Right ventricle myocardium inferior (tissue), 1 donor: ENCODE measurements at regions of chr18 and their contacts with region 1.

Region 1: GRCh38 chr18:11733031-11733430 is 44.0 kb downstream of the GNAL start:
- DNase-seq: peak; percentile 93
- ATAC-seq: peak; percentile 86

Region 2: GRCh38 chr18:11851146-11851805 is 118.2 kb after region 1 on chr18 and contains the start of gene CHMP1B:
- intact Hi-C with region 1: loop called (anchors 5 kb)
- DNase-seq: peak; percentile 100
- ATAC-seq: peak; percentile 98
- total RNA-seq, gene CHMP1B: 28.6 TPM

Region 3: GRCh38 chr18:11872479-11873136 is 139.6 kb after region 1 on chr18:
- intact Hi-C with region 1: loop called (anchors 1 kb)
- DNase-seq: no peak
- ATAC-seq: peak; percentile 86

Region 4: GRCh38 chr18:11995445-11996189 is 262.6 kb after region 1 on chr18:
- intact Hi-C with region 1: loop called (anchors 5 kb)
- DNase-seq: peak; percentile 88
- ATAC-seq: peak; percentile 85

Region 5: GRCh38 chr18:12038639-12039417 is 305.8 kb after region 1 on chr18:
- intact Hi-C with region 1: loop called (anchors 2 kb)
- DNase-seq: peak; percentile 92
- ATAC-seq: peak; percentile 97

Region 6: DNA sequence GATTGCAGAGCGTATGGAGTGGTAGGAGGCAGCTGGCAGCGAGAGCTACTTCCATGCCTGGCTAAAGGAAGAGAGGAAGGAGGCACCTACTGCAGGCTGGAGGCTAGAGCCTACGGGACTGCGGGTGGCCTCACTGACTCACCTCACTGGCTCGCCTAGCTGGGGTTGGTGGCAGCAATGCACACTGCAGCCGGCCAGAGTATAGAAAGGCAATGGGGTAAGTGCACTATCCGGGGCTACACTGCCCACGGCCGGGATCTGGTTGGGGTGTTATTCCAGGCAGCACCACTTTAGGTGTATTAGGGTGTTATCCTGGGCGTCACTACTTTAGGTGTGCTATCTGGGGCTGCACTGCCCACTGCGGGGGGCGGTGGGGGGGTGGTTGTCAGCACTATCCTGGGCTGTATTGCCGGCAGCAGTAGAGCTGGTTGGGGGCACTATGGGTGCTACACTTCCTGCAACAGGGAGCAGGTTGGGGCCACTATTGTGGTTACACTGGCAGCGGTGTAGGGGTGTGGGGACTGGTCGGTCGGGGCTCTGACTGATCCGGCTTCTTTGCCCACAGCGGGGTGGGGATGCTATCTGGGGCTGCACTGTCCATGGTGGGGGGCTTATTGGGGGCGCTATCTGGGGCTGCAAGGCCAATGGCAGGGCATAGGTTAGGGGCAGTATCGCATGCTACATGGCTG is 327.3 kb after region 1 on chr18:
- intact Hi-C with region 1: no loop called
- DNase-seq: peak; percentile 68
- ATAC-seq: no peak